ENCODE measurements at regions of chr16 and their contacts with region 1.

Region 1: GRCh38 chr16:88706288-88706964 is at the starts of genes CTU2 and RNF166:
- DNase-seq: peak; percentile 98
- H3K4me3 Mint-ChIP-seq: peak within 1 kb of the TSS; percentile 88
- H3K27ac Mint-ChIP-seq: peak within 1 kb of the TSS; percentile 87
- H3K4me1 Mint-ChIP-seq: peaks cover 37% of the 10 kb centered on the region
- H3K27me3 Mint-ChIP-seq: no peaks in the 10 kb centered on the region
- total RNA-seq, gene CTU2: 68.8 and 69.9 TPM in 2 replicates
- total RNA-seq, gene RNF166: 47.3 and 49.7 TPM in 2 replicates

Region 2: DNA sequence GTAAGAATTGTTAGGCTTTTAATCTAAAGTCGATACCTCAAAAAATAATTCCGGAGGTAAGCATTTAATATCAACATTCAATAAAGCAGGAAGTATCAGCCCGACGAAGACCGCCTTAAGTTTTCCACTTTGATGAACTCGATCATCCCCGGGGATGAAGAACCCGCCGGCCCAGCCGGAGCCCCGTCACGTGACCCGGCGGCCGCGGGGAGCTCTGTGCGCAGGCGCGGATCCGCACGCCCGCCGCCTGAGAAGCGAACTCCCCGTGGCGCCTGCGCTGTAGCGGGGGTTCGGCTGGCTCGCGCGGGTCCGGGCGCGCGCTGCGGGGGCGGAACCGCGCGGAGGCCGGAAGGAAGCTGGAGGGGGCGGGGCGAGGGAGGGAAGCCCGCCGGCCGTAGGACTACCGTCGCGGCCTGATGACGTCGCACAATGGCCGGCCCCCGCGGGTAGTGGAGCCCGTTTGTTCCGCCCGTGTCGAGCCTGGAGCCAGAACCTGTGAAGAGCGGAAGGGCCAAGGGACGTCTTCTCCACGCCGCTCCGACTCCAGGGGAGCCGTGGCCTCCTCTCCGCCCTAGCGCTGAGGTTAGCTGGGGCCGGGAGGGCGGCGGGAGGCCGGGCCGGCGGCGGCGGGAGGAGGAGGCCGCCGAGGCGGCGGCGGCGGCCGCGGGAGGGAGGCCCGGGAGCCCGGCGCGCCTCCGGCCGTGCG is 136.3 kb before region 1 on chr16 and contains the start of gene ZC3H18:
- intact Hi-C with region 1: loop called (anchors 1 kb)
- DNase-seq: peak; percentile 99
- H3K4me3 Mint-ChIP-seq: peak within 1 kb of the TSS; percentile 91
- H3K27ac Mint-ChIP-seq: peak within 1 kb of the TSS; percentile 90
- H3K4me1 Mint-ChIP-seq: peaks cover 36% of the 10 kb centered on the region
- H3K27me3 Mint-ChIP-seq: no peaks in the 10 kb centered on the region
- total RNA-seq, gene ZC3H18: 106 and 118 TPM in 2 replicates

Region 3: DNA sequence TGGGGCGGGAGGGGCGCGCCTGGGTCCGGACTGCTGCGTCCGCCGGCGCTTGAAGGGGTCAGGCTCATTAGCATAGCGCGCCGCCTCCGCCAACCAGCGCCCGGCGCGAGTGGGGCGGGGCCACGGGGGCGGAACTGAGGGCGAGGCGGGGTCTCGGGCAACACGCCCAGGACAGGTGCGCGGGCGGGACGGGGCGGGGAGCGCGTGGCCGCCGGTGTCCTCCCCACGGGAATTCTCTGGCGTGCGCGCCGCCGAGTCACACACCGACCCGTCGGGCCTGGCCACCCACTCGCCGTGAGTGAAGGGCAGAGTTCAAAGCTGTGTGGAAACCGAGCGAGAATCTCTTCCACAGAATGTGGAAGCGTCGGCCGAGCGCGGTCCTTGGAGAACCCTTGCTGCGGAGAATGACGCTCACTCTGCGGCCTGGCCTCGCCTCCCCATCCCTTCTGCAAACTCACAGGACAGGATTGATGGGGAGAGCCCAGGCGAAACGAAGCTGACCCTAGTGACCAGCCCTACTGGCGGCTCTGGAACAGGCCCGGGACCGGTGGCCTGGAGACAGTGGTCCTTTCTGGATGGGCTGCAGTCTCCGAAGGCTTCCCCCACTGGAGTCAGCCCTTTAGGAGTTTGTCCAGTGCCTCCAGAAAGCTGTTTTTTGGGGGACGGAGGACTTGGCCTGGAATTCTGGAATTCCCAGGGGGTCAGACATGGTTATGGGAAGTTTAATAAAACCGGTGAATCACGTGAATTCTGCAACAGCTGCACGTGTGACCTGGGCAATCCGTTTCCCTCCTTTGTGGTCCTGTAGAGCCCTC is 19.8 kb before region 1 on chr16 and contains the start of gene SNAI3:
- intact Hi-C with region 1: loop called (anchors 1 kb)
- DNase-seq: peak; percentile 98
- H3K4me3 Mint-ChIP-seq: peak within 1 kb of the TSS; percentile 83
- H3K27ac Mint-ChIP-seq: peak within 1 kb of the TSS; percentile 37
- H3K4me1 Mint-ChIP-seq: peaks cover 43% of the 10 kb centered on the region
- H3K27me3 Mint-ChIP-seq: no peaks in the 10 kb centered on the region
- total RNA-seq, gene SNAI3: 3.0 and 3.3 TPM in 2 replicates

Region 4: GRCh38 chr16:88737298-88738150 is 31.1 kb after region 1 on chr16:
- intact Hi-C with region 1: loop called (anchors 1 kb)
- DNase-seq: peak; percentile 88
- H3K4me3 Mint-ChIP-seq: no peak overlapping the region
- H3K27ac Mint-ChIP-seq: no peak overlapping the region
- H3K4me1 Mint-ChIP-seq: no peaks in the 10 kb centered on the region
- H3K27me3 Mint-ChIP-seq: no peaks in the 10 kb centered on the region

Measured in activated CD4-positive, alpha-beta T cell treated with anti-CD3 and anti-CD28 coated beads, Interleukin-2, amount 10 ng/mL, durations not matched to agents 24 days and 14 days (primary cell).